CD8-positive, alpha-beta T cell (primary cell): ENCODE measurements at regions of chr9 and their contacts with region 1.

Region 1: GRCh38 chr9:17342696-17343095 is 207.9 kb downstream of the CNTLN start:
- DNase-seq: no peak
- ATAC-seq: no peak
- H3K4me3 ChIP-seq: no peak overlapping the region
- H3K4me3 Mint-ChIP-seq: no peak overlapping the region
- H3K27ac ChIP-seq: no peak overlapping the region
- H3K27ac Mint-ChIP-seq: no peak overlapping the region
- H3K4me1 ChIP-seq: no peaks in the 10 kb centered on the region
- H3K4me1 Mint-ChIP-seq: no peaks in the 10 kb centered on the region
- H3K27me3 ChIP-seq: no peaks in the 10 kb centered on the region
- H3K27me3 Mint-ChIP-seq: no peaks in the 10 kb centered on the region
- CTCF ChIP-seq: no peak

Region 2: GRCh38 chr9:17361378-17361777 is 18.7 kb after region 1 on chr9:
- CTCF ChIA-PET with region 1: no interaction called
- POLR2A ChIA-PET with region 1: no interaction called
- intact Hi-C with region 1: no loop called
- DNase-seq: no peak
- ATAC-seq: no peak
- H3K4me3 ChIP-seq: no peak overlapping the region
- H3K4me3 Mint-ChIP-seq: no peak overlapping the region
- H3K27ac ChIP-seq: no peak overlapping the region
- H3K27ac Mint-ChIP-seq: no peak overlapping the region
- H3K4me1 ChIP-seq: no peaks in the 10 kb centered on the region
- H3K4me1 Mint-ChIP-seq: no peaks in the 10 kb centered on the region
- H3K27me3 ChIP-seq: no peaks in the 10 kb centered on the region
- H3K27me3 Mint-ChIP-seq: no peaks in the 10 kb centered on the region
- CTCF ChIP-seq: no peak

Region 3: DNA sequence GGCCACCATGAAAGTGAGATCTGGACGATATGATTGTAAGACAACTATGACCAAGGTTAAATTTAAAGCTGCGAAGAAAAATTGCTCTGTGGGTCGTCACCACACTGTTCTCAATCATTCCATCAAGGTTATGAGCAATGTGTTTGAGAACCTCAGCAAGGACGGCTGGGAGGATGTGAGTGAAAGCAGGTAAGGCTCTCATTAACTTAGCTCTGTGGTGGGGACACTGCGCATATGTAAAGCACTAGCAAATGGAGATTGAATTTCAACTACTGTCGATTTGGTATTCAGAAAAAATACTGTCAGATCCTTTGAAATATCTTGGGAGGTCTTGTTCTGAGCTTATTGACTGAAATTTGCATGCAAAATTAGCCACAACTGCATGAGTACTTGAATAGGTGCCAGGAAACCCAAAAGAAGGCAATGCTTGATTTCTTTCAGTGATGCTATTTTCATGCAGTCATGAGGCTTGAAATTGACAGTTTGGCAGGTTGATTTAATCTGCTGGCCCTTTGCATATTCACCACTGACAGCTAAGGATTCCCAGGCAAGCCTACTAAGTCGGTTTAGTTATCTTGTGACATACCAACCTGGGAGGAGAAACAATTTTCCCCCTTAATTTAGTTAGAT is 52.3 kb after region 1 on chr9:
- CTCF ChIA-PET with region 1: no interaction called
- POLR2A ChIA-PET with region 1: no interaction called
- intact Hi-C with region 1: loop called in 1 of 2 experiments (anchors 5 kb)
- DNase-seq: no peak
- ATAC-seq: no peak
- H3K4me3 ChIP-seq: no peak overlapping the region
- H3K4me3 Mint-ChIP-seq: no peak overlapping the region
- H3K27ac ChIP-seq: no peak overlapping the region
- H3K27ac Mint-ChIP-seq: no peak overlapping the region
- H3K4me1 ChIP-seq: no peaks in the 10 kb centered on the region
- H3K4me1 Mint-ChIP-seq: no peaks in the 10 kb centered on the region
- H3K27me3 ChIP-seq: no peaks in the 10 kb centered on the region
- H3K27me3 Mint-ChIP-seq: no peaks in the 10 kb centered on the region
- CTCF ChIP-seq: no peak

Region 4: DNA sequence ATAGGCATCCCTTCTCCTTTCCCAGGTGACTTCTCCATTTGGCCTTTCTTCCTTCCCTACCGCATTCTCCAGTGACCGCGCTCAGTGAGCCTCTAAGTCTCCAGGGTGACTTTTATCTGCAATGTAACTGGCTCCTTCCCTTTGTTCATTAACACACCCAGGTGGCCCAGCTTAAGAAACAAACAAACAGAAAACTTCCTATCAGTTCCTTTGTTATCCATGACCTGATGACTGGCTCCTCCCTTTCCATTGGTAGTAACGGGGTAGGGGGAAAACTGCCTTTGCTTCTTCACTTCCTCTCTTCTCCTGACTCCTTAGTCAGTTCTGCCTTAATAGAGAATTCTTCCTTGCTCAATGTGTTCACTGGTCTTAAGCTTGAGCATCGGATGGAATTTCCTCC is 229.1 kb after region 1 on chr9:
- CTCF ChIA-PET with region 1: no interaction called
- POLR2A ChIA-PET with region 1: no interaction called
- intact Hi-C with region 1: no loop called
- DNase-seq: no peak
- ATAC-seq: no peak
- H3K4me3 ChIP-seq: no peak overlapping the region
- H3K4me3 Mint-ChIP-seq: no peak overlapping the region
- H3K27ac ChIP-seq: no peak overlapping the region
- H3K27ac Mint-ChIP-seq: no peak overlapping the region
- H3K4me1 ChIP-seq: no peaks in the 10 kb centered on the region
- H3K4me1 Mint-ChIP-seq: no peaks in the 10 kb centered on the region
- H3K27me3 ChIP-seq: no peaks in the 10 kb centered on the region
- H3K27me3 Mint-ChIP-seq: no peaks in the 10 kb centered on the region
- CTCF ChIP-seq: no peak

Region 5: DNA sequence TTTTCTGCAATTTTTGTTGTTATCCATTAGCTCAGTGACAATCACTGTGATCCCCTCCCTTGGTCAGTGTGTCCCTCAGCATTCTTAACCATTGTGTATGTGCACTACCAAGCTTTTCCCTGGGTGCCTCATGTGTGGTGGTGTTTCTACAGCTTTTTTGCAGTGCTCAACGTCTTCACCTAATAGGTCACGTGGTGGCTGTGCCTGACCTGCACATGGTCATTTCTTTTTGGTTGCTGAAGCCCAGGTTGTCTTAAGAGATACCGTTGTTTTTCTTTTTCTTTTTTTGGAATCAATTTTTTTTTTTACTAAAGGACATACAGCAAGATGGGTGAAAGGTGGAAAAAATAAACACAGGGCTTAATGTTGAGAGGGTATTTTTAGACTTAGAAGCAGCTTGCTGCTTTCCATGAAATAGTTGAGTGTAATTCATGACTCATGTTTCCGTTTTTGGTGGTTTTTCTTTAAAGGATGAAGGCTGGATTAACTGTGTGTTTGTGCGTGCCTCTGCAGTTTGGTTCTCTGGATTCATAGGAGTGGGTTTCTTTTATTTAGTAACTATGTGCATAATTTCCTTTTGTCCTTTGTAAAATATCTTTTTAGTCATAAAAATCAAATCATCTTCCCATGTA is 258.4 kb after region 1 on chr9:
- CTCF ChIA-PET with region 1: no interaction called
- POLR2A ChIA-PET with region 1: no interaction called
- intact Hi-C with region 1: no loop called
- DNase-seq: no peak
- ATAC-seq: no peak
- H3K4me3 ChIP-seq: no peak overlapping the region
- H3K4me3 Mint-ChIP-seq: no peak overlapping the region
- H3K27ac ChIP-seq: no peak overlapping the region
- H3K27ac Mint-ChIP-seq: no peak overlapping the region
- H3K4me1 ChIP-seq: no peaks in the 10 kb centered on the region
- H3K4me1 Mint-ChIP-seq: no peaks in the 10 kb centered on the region
- H3K27me3 ChIP-seq: no peaks in the 10 kb centered on the region
- H3K27me3 Mint-ChIP-seq: no peaks in the 10 kb centered on the region
- CTCF ChIP-seq: no peak

Region 6: DNA sequence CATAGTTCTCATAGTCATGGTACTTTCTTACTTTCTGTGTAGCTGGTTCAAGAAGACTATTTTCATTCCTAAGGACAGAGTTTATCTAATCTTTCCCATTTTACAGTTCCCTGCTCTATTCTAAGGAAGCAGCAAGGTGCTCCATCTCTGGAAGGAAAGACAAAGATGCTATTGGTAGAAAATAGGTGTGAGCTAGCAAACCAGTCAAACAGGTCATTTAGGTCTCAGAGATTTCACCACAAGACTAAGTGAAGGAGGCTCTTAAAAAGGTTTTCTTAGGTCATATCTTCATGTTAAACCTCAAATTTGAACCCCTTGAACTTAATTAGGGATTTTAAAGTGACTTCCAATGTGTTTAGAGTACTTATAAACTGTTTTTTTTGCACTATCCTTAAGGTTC is 1193.9 kb after region 1 on chr9:
- CTCF ChIA-PET with region 1: no interaction called
- POLR2A ChIA-PET with region 1: no interaction called
- intact Hi-C with region 1: no loop called
- DNase-seq: no peak
- ATAC-seq: no peak
- H3K4me3 ChIP-seq: no peak overlapping the region
- H3K4me3 Mint-ChIP-seq: no peak overlapping the region
- H3K27ac ChIP-seq: no peak overlapping the region
- H3K27ac Mint-ChIP-seq: no peak overlapping the region
- H3K4me1 ChIP-seq: no peaks in the 10 kb centered on the region
- H3K4me1 Mint-ChIP-seq: no peaks in the 10 kb centered on the region
- H3K27me3 ChIP-seq: no peaks in the 10 kb centered on the region
- H3K27me3 Mint-ChIP-seq: no peaks in the 10 kb centered on the region
- CTCF ChIP-seq: no peak